ENCODE measurements at regions of chrX and their contacts with region 1.

Region 1: GRCh38 chrX:2819345-2820135 is 9.2 kb upstream of the GYG2 start:
- DNase-seq: peak; percentile 63
- CTCF ChIP-seq: peak; percentile 55

Region 2: DNA sequence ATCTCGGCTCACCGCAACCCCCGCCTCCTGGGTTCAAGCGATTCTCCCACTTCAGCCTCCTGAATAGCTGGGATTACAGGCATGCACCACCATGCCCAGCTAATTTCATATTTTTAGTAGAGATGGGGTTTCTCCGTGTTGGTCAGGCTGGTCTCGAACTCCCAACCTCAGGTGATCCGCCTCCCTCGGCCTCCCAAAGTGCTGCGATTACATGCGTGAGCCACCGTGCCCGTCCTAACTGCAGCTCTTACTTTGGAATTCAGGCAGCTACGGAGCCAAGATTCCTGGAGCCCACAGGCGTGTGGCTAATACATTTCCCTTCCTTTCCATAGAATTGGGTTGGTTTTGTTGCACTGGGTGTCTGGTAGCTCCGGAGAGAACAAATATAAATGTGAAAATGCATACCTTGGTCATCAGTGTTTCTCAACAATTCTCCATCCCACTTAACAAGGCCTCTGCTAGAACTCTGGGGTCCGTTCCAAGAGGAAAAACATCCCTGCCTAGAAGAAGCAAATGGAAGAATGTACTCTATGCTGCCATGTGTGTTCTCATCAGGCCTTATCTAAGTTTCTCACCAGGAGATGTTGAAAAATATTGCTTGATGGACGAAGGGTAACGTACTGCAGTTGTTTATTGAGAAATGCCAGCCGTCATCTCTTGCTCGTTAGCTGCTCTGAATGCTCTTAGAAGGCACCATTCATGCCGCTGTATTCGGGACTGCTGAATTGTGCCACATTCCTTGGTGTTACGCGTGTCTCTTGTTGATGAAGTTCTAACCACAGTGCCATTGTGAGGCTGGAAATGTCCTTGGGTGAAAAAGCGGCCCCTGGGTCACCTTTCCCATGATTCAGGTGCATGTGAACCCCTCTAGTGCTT is 179.0 kb before region 1 on chrX:
- in situ Hi-C with region 1: loop called (anchors 10 kb)
- DNase-seq: no peak
- CTCF ChIP-seq: no peak